Transverse colon (tissue), 4 donors: ENCODE measurements at regions of chr2 and their contacts with region 1.

Region 1: DNA sequence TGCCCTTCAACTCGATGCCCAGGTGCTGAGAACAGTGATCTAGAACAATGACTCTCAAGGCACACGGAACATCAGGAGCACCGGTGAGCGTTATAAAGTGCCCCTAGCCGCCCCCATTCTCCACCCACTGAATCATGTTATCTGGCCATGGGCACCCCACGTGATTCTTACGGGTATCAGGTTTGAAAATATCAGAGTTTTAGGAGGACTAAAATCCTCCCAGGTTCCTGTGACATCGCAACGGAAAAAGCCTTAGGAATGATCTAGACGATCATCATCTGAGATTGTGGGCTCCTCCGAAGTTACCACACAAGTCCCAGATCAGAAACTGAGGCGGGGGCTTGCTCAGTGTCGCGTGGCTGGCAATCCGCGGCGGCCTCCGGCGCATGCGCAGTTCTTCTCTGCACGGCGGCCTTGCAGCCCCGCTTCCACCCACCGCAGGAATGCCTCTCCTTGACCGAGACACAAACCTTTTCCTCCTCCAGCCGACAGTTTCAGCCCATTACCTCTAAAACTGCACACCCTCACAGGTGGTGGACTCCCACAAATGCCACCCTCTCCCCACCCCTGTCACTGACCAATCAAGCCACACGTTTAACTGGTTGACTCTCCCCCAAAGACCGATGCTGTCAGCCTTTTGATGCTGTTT is 5.8 kb upstream of the MRPL33 start:
- DNase-seq: peak; percentile 66
- H3K4me3 ChIP-seq: peak overlapping the region in 3 of 4 donors; percentile 2 to 36 (median 27)
- H3K27ac ChIP-seq: peak overlapping the region in 1 of 4 donors; percentile 10
- H3K4me1 ChIP-seq: peaks cover 0 to 5% (median 4%) of the 10 kb centered on the region in 4 donors
- H3K27me3 ChIP-seq: no peaks in the 10 kb centered on the region
- CTCF ChIP-seq: no peak
- EP300 ChIP-seq: no peak
- POLR2A ChIP-seq: no peak

Region 2: DNA sequence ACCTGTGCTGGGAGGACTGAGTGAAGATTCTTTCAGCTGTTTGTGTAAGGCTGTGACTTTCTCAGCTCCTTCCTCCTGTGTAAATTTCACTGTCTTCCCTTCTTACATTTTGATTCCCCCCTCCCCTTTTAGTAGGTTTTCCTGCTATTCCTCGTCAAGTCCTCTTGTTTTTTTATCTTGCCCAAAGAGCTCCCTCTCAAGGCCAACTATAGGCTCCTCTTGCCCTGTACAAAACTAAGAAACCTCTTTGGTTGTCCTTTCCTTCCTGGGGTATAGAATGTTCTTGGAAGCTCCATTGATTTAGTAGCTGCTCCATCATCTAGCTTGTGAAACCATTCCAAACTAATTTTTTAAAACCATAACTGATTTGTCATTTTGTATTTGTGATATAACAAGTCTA is 144.2 kb before region 1 on chr2:
- in situ Hi-C with region 1: no loop called
- intact Hi-C with region 1: no loop called
- DNase-seq: no peak
- H3K4me3 ChIP-seq: no peak overlapping the region
- H3K27ac ChIP-seq: no peak overlapping the region
- H3K4me1 ChIP-seq: no peaks in the 10 kb centered on the region
- H3K27me3 ChIP-seq: no peaks in the 10 kb centered on the region
- CTCF ChIP-seq: no peak
- EP300 ChIP-seq: no peak
- POLR2A ChIP-seq: no peak

Region 3: GRCh38 chr2:27638037-27638637 is 127.6 kb before region 1 on chr2:
- in situ Hi-C with region 1: no loop called
- intact Hi-C with region 1: no loop called
- DNase-seq: no peak
- H3K4me3 ChIP-seq: no peak overlapping the region
- H3K27ac ChIP-seq: no peak overlapping the region
- H3K4me1 ChIP-seq: no peaks in the 10 kb centered on the region
- H3K27me3 ChIP-seq: no peaks in the 10 kb centered on the region
- CTCF ChIP-seq: no peak
- EP300 ChIP-seq: no peak
- POLR2A ChIP-seq: no peak

Region 4: DNA sequence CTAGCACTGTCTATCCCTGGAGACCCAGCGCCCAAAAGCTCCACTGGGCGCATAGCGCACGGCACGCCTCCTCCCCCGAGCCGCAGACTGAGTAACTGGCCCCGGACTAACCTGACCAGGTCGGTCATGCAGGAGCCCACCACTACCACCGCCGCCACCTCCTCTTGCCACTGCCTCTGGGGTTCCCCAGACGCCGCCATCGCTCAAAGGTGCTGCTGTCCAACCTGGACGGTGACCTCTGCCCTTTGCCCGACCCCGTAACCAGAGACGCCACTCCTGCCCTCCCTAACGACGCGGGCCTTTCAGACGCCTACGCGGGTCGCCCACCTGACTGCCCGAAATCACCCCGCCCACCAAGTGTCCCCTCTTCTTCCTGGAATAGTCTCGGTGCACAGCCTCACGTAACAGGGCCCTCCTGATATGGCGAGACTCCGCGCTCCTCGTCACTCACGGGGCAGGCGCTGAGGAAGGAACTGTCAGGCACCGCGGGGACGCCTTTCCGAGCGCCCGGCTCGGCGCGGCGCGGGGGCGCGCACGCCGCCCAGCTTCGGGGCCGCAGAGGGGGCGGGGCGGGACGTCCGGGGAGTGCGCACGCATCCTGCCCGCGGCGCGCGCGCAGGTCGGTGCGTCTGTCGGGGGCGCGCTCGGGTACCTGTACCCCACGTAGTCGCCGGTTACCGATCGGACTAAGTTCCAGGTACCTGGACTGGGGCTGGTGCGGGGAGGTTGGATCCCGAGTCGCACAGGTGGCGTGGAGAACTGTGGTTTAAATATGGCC is 124.6 kb after region 1 on chr2 and contains the starts of genes BABAM2 and RBKS:
- in situ Hi-C with region 1: loop called in 1 of 4 experiments (anchors 10 kb)
- intact Hi-C with region 1: no loop called
- DNase-seq: peak; percentile 90
- H3K4me3 ChIP-seq: peak within 1 kb of the TSS; percentile 62 to 89 (median 78)
- H3K27ac ChIP-seq: peak within 1 kb of the TSS; percentile 93 to 96 (median 94)
- H3K4me1 ChIP-seq: peaks cover 4 to 59% (median 26%) of the 10 kb centered on the region in 4 donors
- H3K27me3 ChIP-seq: no peaks in the 10 kb centered on the region
- CTCF ChIP-seq: no peak
- EP300 ChIP-seq: peak; percentile 74
- POLR2A ChIP-seq: peak; percentile 83
- total RNA-seq, gene BABAM2: 33.3 to 48.9 (median 37.9) TPM
- total RNA-seq, gene RBKS: 1.5 to 15.2 (median 15.1) TPM in 3 of 4 donors, not detected in the other